Mucosa of descending colon (tissue), 3 donors: ENCODE measurements at regions of chr7 and their contacts with region 1.

Region 1: GRCh38 chr7:101153969-101154692 is at the start of gene AP1S1:
- DNase-seq: peak; percentile 96 to 97 (median 96)
- ATAC-seq: peak; percentile 97
- H3K4me3 ChIP-seq: peak within 1 kb of the TSS; percentile 68
- H3K4me1 ChIP-seq: peaks cover 9% of the 10 kb centered on the region
- CTCF ChIP-seq: peak; percentile 9
- total RNA-seq, gene AP1S1: 32.3 to 83.6 (median 63.9) TPM

Region 2: DNA sequence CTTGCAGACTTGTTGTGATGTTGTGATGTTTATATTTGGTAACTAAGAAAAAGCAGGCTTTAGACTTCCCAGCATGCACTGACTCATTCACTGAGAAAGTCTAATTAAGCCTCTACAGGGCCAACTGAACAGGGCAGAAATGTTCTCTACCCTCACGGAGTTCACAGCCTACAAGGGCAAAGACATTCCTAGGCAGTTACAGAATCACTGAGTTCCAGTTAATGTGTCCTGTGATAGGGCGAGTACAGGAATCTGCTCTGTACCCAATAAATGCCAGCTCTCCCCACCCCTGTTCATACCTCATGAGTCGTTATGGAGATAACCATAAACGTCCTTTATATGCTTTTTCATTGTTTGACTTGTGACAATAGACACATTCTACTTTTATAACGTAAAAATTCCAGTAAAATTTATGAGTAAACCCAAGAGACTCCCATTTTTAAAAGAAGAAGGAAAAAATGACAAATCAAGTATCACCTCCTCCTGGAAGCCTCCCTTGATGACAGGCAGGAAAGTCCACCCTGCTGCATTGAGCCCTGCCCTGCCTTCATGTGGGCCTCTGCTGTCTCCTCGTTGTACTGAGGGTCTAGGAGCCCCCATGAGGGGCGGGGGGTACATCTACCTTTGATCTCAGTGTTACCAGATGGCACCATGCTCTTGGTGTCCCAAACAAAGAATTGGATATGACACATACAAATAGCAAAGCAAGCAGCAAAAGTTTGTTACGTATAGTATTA is 170.5 kb before region 1 on chr7:
- intact Hi-C with region 1: no loop called
- DNase-seq: peak in 2 of 3 donors; percentile 54 to 74
- ATAC-seq: peak; percentile 82
- H3K4me3 ChIP-seq: no peak overlapping the region
- H3K4me1 ChIP-seq: peaks cover 31% of the 10 kb centered on the region
- CTCF ChIP-seq: peak; percentile 15

Region 3: DNA sequence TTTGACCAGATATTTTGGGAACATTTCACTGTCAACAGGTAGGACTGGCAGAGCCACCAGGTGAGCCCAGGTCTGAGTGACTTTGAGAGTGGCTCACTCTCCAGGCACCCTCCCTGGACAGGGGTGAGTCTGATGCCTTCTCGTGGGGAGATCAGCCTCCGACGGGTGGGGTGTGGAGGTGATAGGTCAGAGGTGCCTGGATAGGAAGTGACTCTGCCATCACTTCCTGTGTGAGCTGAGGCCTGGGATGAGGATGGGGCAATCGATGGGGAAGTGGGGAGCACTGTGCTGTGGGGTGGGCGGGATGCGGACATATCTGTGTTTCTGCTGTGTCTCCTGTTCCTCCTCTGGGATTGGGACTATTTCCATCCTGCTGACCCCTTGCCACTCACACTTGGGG is 132.9 kb after region 1 on chr7:
- intact Hi-C with region 1: loop called in 1 of 2 experiments (anchors 10 kb)
- DNase-seq: peak in 1 of 3 donors; percentile 27
- ATAC-seq: no peak
- H3K4me3 ChIP-seq: no peak overlapping the region
- H3K4me1 ChIP-seq: no peaks in the 10 kb centered on the region
- CTCF ChIP-seq: no peak